Mammary epithelial cell (primary cell): ENCODE measurements at regions of chr17 and their contacts with region 1.

Region 1: DNA sequence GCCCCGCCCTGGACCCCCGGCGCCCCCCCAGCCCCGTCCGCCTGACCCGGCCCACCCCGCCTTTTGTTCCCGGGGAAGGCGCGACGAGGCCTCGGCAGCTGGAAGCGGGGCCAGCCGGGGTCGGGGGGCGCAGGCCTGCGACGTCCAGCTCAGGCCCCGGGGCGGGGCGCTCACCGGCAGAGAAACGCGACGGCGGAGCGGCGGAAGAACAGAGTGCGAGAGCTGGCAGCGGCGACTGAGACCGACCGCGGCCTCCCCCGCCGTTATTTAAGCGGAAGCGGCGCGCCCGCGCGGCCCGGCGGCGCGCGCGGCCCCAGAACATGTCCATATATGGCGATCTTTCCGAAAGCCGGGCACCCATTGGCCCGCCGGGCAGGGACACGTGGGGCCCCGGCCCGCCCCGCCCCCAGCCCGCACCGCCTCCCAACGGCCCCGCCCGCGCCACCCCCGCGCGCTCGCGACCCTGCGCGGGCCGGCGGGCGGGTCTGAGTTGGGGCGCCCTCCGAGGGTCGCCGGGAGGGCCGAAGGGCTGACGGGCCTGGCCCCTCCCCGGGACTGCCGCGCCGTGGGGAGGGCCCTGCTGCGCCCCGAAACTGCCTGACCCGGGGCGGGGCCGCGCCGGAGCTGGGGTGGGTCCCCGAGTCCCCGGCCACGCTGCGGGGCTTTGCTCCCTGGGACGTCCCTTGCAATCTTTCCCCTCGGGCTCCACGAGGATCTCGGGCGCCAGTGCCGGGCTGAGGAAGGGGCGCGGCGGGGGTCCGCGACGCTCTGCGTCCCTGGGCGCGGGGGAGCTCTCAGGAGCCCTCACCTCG is at the start of gene ACTG1:
- DNase-seq: peak; percentile 91
- H3K4me3 ChIP-seq: peak within 1 kb of the TSS; percentile 90 to 100 (median 93)
- H3K27ac ChIP-seq: peak within 1 kb of the TSS; percentile 70
- H3K4me1 ChIP-seq: peaks cover 40% of the 10 kb centered on the region
- H3K27me3 ChIP-seq: no peaks in the 10 kb centered on the region
- CTCF ChIP-seq: no peak
- total RNA-seq, gene ACTG1: 3,950 to 24,255 TPM

Region 2: GRCh38 chr17:81018044-81018802 is 494.5 kb before region 1 on chr17:
- CTCF ChIA-PET with region 1: no interaction called
- dilution Hi-C with region 1: loop called (anchors 25 kb)
- in situ Hi-C with region 1: no loop called
- intact Hi-C with region 1: no loop called
- DNase-seq: no peak
- H3K4me3 ChIP-seq: no peak overlapping the region
- H3K27ac ChIP-seq: no peak overlapping the region
- H3K4me1 ChIP-seq: peaks cover 13% of the 10 kb centered on the region
- H3K27me3 ChIP-seq: no peaks in the 10 kb centered on the region
- CTCF ChIP-seq: no peak

Region 3: GRCh38 chr17:81253358-81254131 is 259.2 kb before region 1 on chr17:
- CTCF ChIA-PET with region 1: no interaction called
- dilution Hi-C with region 1: no loop called
- in situ Hi-C with region 1: no loop called
- intact Hi-C with region 1: loop called (anchors 5 kb)
- DNase-seq: no peak
- H3K4me3 ChIP-seq: no peak overlapping the region
- H3K27ac ChIP-seq: no peak overlapping the region
- H3K4me1 ChIP-seq: no peaks in the 10 kb centered on the region
- H3K27me3 ChIP-seq: no peaks in the 10 kb centered on the region
- CTCF ChIP-seq: peak; percentile 61 to 66

Region 4: GRCh38 chr17:81456798-81457197 is 56.0 kb before region 1 on chr17:
- CTCF ChIA-PET with region 1: no interaction called
- dilution Hi-C with region 1: loop called (anchors 5 kb)
- in situ Hi-C with region 1: no loop called
- intact Hi-C with region 1: no loop called
- DNase-seq: no peak
- H3K4me3 ChIP-seq: no peak overlapping the region
- H3K27ac ChIP-seq: no peak overlapping the region
- H3K4me1 ChIP-seq: no peaks in the 10 kb centered on the region
- H3K27me3 ChIP-seq: no peaks in the 10 kb centered on the region
- CTCF ChIP-seq: no peak

Region 5: DNA sequence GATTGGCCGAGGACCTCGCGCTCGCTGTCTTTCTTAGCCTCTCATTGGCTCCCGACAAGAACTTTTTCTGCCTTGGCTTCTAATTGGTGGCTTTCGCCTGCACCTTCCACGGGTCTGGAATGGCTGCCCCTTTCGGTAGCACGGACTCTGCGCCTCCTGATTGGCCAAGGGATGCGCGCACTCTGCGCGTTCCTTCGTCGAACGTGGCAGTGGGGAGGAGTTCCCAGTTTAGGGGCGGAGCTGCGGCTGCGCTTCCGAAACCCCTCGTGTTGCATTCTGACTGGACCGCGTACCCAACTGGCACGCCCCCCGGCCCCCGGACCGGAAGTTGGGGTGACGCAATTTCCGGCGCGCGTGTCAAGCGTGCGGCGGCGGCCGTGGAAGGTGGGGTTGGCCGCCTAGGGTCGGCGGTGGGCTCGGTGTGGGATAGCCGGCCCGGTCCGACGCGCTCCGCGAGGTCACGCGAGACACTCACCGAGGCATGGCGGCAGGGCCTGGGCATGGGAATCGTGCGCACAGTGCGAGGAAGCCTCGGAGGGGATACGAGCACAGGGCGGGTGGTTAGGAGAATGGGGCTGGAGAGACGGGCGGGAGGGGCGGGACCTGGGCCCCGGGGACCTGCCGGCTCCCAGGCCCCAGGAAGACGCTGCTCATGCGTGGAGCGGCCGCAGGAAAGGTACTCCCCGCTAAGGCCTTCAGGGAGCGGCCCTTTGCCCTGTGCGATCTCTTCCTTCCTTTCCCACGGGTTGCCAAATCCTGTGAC is 348.2 kb after region 1 on chr17:
- CTCF ChIA-PET with region 1: no interaction called
- dilution Hi-C with region 1: no loop called
- in situ Hi-C with region 1: no loop called
- intact Hi-C with region 1: loop called (anchors 10 kb)
- DNase-seq: peak; percentile 100
- H3K4me3 ChIP-seq: peak overlapping the region; percentile 52 to 94 (median 79)
- H3K27ac ChIP-seq: peak overlapping the region; percentile 74
- H3K4me1 ChIP-seq: peaks cover 27% of the 10 kb centered on the region
- H3K27me3 ChIP-seq: no peaks in the 10 kb centered on the region
- CTCF ChIP-seq: no peak